Esophagus muscularis mucosa (tissue), 4 donors: ENCODE measurements at regions of chr1 and their contacts with region 1.

Region 1: GRCh38 chr1:48677306-48678287 is 99.1 kb downstream of the BEND5 start:
- DNase-seq: no peak
- H3K4me3 ChIP-seq: no peak overlapping the region
- H3K27ac ChIP-seq: no peak overlapping the region
- H3K4me1 ChIP-seq: no peaks in the 10 kb centered on the region
- H3K27me3 ChIP-seq: peaks cover 0 to 15% (median 0%) of the 10 kb centered on the region in 4 donors
- CTCF ChIP-seq: peak; percentile 39 to 55 (median 41)
- EP300 ChIP-seq: no peak
- POLR2A ChIP-seq: no peak

Region 2: DNA sequence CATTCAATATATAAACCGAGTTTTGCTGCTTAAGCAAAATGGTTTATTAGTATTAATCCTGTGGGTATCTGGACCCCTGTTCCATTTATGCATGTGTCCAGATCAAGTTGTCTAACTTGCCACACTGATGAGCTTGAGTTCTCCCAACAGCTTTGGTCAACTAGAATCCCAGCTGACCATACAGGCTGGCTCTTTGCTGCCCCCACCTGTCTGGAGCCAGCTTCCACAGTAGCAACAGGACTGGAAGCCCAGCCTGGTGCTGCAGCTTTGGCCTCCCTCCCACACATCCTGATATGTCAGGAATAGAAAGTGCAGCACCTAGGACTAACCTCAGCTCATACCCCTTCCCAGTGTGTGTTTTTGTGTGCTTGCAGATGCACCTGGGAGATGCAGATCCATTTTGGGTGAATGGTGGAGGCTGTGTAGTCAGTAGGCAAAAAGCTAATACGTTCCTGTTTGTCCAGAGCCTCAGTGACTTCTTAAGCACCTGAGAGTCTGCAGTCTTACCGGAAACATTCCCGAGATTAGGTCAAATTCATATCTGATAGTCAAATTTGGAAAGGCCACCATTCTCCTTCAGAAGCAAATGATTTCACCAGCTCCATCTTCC is 140.0 kb after region 1 on chr1:
- intact Hi-C with region 1: loop called (anchors 10 kb)
- DNase-seq: no peak
- H3K4me3 ChIP-seq: no peak overlapping the region
- H3K27ac ChIP-seq: no peak overlapping the region
- H3K4me1 ChIP-seq: no peaks in the 10 kb centered on the region
- H3K27me3 ChIP-seq: no peaks in the 10 kb centered on the region
- CTCF ChIP-seq: peak; percentile 57 to 71 (median 64)
- EP300 ChIP-seq: no peak
- POLR2A ChIP-seq: no peak